ENCODE measurements at regions of chr13 and their contacts with region 1.

Region 1: DNA sequence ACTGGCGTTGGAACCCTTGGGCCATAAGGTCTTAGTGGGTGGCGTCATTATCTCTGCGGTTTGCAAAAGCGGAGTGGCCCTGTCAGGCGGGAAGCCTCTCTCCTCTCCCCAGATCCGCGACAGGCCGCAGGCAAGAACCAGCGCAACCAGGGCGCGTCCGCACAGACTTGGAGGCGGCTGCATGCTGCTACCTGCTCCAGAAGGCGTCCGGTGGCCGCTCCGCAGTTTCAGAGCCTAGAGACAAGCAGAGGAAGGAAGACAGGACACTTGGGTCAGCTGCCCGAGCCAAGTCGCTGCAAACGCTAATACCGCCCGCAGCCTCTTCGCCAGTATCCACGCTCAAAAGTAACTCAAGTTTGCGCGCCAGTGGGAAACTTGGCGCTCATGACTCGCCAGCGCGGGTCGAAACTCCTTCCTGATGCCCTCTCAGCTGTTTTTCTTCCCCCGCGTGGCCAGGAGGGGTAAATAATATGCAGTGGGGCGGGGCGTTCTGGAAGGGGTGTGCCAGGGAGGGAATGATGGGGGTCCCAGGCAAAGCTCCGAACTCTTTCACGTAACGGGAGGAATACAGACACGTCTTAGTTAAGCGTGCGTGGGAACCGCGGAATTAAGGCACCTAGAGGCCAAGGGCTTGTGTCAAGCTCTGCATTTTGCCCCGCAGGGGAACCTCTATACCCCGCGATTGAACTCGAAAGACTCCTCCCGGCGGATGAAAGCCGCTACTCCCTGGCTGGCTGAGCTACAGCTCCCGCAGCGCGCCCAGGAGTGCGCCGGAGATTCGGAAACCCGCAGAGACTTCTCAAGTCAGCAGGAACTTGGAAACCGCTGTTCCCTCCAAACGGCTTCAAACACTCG is at the start of gene EDNRB:
- DNase-seq: peak; percentile 66
- H3K4me3 ChIP-seq: peak within 1 kb of the TSS; percentile 67 to 71 (median 67)
- H3K27ac ChIP-seq: no peak within 1 kb of the TSS
- H3K4me1 ChIP-seq: peaks cover 10% of the 10 kb centered on the region
- H3K27me3 ChIP-seq: no peaks in the 10 kb centered on the region
- CTCF ChIP-seq: peak; percentile 5 to 30
- POLR2A ChIP-seq: no peak
- total RNA-seq, gene EDNRB: 2.3 and 2.6 TPM in 2 replicates

Region 2: GRCh38 chr13:77779552-77780272 is 138.9 kb before region 1 on chr13:
- CTCF ChIA-PET with region 1: interaction called, 5 read pairs
- POLR2A ChIA-PET with region 1: no interaction called
- dilution Hi-C with region 1: no loop called
- intact Hi-C with region 1: loop called (anchors 1 kb)
- DNase-seq: peak; percentile 86
- H3K4me3 ChIP-seq: no peak overlapping the region
- H3K27ac ChIP-seq: peak overlapping the region; percentile 46
- H3K4me1 ChIP-seq: peaks cover 8% of the 10 kb centered on the region
- H3K27me3 ChIP-seq: no peaks in the 10 kb centered on the region
- CTCF ChIP-seq: peak; percentile 38 to 45
- POLR2A ChIP-seq: no peak

Region 3: GRCh38 chr13:77868714-77869113 is 49.9 kb before region 1 on chr13:
- CTCF ChIA-PET with region 1: no interaction called
- POLR2A ChIA-PET with region 1: no interaction called
- dilution Hi-C with region 1: no loop called
- intact Hi-C with region 1: loop called (anchors 2 kb)
- DNase-seq: peak; percentile 26
- H3K4me3 ChIP-seq: no peak overlapping the region
- H3K27ac ChIP-seq: no peak overlapping the region
- H3K4me1 ChIP-seq: no peaks in the 10 kb centered on the region
- H3K27me3 ChIP-seq: no peaks in the 10 kb centered on the region
- CTCF ChIP-seq: no peak
- POLR2A ChIP-seq: no peak

Region 4: DNA sequence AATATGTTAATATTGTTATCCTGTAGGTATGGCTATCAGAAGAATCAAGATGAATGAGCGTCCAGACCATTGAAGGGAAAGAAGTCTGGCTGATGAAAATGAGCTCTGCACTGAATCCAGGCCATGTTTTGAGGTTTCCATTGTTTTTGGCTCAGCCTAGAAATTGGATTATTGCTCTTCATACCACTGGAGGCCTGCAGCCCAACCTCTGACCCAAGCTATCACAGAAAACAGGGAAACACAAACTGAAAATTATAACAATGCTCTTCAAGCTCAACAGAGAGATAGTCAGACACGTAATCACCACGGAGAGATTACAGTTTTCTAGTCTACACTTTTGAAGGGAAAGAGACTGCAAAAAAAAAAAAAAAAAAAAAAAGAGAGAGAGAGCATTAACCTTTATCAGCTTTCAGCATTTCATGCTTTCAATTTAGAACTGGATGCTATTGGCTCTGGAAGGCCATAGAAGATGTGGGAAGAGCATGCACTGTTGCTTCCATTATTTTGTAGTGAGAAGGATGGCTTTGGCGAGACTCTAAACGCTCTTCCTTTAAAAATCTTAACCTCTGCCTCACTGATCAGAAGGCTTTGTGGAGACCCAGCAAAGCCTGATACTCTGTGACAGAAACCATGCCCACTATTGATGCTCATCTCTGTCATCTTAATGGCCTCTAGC is 10.8 kb before region 1 on chr13:
- CTCF ChIA-PET with region 1: interaction called, 27 read pairs
- POLR2A ChIA-PET with region 1: interaction called, 3 read pairs
- dilution Hi-C with region 1: no loop called
- intact Hi-C with region 1: loop called (anchors 1 kb)
- DNase-seq: peak; percentile 98
- H3K4me3 ChIP-seq: no peak overlapping the region
- H3K27ac ChIP-seq: peak overlapping the region; percentile 50
- H3K4me1 ChIP-seq: peaks cover 6% of the 10 kb centered on the region
- H3K27me3 ChIP-seq: no peaks in the 10 kb centered on the region
- CTCF ChIP-seq: no peak
- POLR2A ChIP-seq: no peak

Region 5: DNA sequence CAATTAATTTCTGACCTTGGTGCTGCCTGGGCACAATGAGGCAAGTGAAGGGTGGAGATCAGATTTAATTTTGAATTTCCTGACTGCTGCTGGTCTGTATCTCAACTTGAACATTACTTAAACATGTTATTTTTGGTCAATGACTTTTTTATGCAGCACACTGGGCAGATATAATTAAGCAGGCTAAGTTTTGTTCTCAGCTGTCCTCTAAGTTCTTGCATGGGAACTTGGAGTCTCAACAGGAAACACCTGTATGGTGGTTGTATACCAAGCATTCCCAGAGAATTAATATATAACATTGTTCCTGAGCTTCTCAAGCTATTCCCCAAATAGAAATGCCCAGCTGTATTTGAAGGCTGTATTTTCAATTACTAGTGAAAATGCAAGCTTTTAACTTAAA is 113.5 kb after region 1 on chr13:
- CTCF ChIA-PET with region 1: interaction called, 14 read pairs
- POLR2A ChIA-PET with region 1: no interaction called
- dilution Hi-C with region 1: no loop called
- intact Hi-C with region 1: no loop called
- DNase-seq: peak; percentile 96
- H3K4me3 ChIP-seq: no peak overlapping the region
- H3K27ac ChIP-seq: peak overlapping the region; percentile 66
- H3K4me1 ChIP-seq: peaks cover 21% of the 10 kb centered on the region
- H3K27me3 ChIP-seq: no peaks in the 10 kb centered on the region
- CTCF ChIP-seq: no peak
- POLR2A ChIP-seq: no peak

Region 6: DNA sequence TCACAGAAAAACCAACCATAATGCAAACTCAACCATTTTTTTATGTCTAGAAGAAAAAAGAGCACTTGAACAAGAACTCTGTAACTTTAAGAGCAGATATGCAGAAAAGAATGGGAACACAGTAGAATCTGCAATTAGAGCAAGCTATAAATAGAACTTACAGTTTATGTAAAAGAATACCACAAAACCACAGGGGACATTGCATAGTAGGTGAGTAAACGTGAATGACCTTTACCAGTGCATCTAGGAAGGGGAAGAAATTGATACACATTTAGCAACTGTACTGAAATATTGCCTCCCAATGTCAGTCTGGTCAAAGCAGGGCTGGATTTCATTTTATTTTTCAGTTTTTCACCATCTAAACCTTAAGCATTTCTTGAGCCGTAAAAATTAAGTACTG is 242.2 kb after region 1 on chr13:
- CTCF ChIA-PET with region 1: no interaction called
- POLR2A ChIA-PET with region 1: no interaction called
- dilution Hi-C with region 1: no loop called
- intact Hi-C with region 1: no loop called
- DNase-seq: no peak
- H3K4me3 ChIP-seq: no peak overlapping the region
- H3K27ac ChIP-seq: no peak overlapping the region
- H3K4me1 ChIP-seq: no peaks in the 10 kb centered on the region
- H3K27me3 ChIP-seq: no peaks in the 10 kb centered on the region
- CTCF ChIP-seq: no peak
- POLR2A ChIP-seq: no peak

Measured in endothelial cell of umbilical vein (primary cell).